ENCODE measurements at regions of chr11 and their contacts with region 1.

Region 1: DNA sequence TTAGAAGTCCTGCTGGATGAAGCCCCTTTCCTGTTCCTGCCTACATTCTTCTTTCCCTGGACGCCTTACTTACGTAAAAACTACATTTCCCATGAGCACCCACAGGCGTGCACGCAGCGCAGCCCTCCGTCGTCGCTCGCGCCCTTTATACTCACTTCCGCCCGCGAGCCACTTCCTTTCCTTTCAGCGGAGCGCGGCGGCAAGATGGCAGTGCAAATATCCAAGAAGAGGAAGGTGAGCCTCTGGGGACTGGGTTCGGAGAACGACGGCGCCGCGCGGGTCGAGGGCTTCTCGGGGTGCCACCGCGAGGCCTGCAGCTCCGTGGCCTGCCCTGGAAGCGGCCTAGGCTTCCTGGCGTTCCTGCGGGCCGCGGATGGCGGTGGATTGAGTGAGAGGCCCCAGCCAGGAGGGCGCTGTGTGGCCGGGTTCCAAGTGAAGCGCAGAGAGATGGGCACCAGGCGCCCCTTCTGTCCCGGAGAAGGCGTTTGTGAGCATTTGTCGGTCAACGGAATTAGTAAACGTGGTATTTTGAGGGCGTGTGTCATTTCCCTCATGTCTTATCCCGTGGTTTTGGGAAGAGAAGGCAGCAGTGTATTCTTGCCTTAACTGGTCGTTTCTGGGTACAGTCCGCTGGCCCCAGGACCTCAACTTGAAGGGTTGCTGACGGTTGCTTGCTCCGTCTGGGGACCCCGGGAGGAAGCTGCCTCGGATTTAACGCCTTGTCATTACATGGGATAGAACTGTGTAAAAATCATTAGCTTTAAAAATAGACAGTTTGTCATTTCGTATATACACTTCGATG is at the start of gene RPS3:
- DNase-seq: peak; percentile 89 to 92
- ATAC-seq: peak; percentile 96 to 99 (median 98)
- H3K4me3 ChIP-seq: peak within 1 kb of the TSS; percentile 53 to 87 (median 78)
- H3K27ac ChIP-seq: peak within 1 kb of the TSS; percentile 42 to 98 (median 91)
- H3K4me1 ChIP-seq: peaks cover 8 to 44% (median 29%) of the 10 kb centered on the region in 9 donors
- H3K27me3 ChIP-seq: no peaks in the 10 kb centered on the region
- CTCF ChIP-seq: peak in 4 of 9 donors; percentile 8 to 46 (median 38)
- total RNA-seq, gene RPS3: 803 to 1,301 (median 939) TPM

Region 2: GRCh38 chr11:75445315-75445953 is 45.9 kb after region 1 on chr11:
- intact Hi-C with region 1: loop called in 2 of 10 experiments (anchors 10 kb)
- DNase-seq: peak; percentile 66 to 75
- ATAC-seq: peak; percentile 57 to 85 (median 66)
- H3K4me3 ChIP-seq: no peak overlapping the region
- H3K27ac ChIP-seq: no peak overlapping the region
- H3K4me1 ChIP-seq: peaks cover 0 to 7% (median 0%) of the 10 kb centered on the region in 9 donors
- H3K27me3 ChIP-seq: no peaks in the 10 kb centered on the region
- CTCF ChIP-seq: peak; percentile 91 to 98 (median 94)

Region 3: DNA sequence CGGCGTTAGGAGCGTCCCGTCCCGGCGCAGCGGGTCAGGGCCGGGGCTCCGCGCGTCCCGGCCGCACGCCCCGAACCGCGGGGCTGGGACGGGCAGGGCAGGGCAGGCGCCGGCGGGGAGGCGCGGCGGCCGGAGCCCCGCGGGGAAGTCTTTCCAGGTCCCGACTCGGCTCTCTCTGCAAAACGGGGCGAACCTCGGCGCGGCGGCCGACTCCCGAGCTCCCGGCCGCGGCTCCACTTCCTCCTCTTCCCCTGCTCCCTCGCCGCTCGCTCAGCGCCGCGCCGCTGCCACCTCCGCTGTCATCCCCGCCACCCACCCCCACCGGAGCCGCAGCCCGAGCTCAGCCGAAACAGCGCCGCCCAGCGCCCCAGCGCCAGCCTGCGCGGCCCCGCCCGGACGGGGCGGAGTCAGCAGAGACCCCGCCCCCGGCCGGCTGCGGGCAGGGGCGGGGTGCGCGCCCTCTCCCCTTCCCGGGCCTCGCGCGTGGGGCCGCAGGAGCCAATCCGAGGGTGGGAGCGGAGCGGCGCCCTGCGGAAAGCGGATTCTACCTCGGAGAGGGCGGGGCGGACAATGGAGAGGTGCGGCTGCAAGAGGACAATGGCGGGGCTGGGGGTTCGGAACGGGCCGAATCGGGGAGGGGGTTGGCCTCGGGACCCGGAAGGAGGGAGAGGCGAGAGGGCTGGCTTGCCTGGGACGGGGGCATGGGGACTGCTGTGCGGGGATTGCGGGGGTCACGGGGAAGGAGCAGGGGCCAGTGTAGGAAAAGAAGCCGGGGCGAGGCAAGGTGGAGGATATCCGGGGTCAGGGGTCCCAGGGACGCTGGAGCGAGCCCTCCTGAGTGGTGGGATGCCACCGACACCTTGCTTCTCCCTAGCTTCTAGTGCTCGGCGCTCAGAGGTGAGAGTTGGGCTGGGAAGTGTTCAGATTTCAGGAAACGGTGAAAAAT is 126.3 kb after region 1 on chr11 and contains the start of gene GDPD5:
- intact Hi-C with region 1: loop called in 3 of 10 experiments (anchors 5 kb)
- DNase-seq: peak; percentile 80 to 83
- ATAC-seq: peak; percentile 95 to 98 (median 96)
- H3K4me3 ChIP-seq: peak within 1 kb of the TSS; percentile 65 to 98 (median 76)
- H3K27ac ChIP-seq: peak within 1 kb of the TSS in 6 of 10 donors; percentile 31 to 71 (median 47)
- H3K4me1 ChIP-seq: peaks cover 3 to 36% (median 23%) of the 10 kb centered on the region in 9 donors
- H3K27me3 ChIP-seq: peaks cover 0 to 22% (median 0%) of the 10 kb centered on the region in 7 donors
- CTCF ChIP-seq: peak; percentile 17 to 79 (median 57)
- total RNA-seq, gene GDPD5: 3.3 to 8.0 (median 4.1) TPM

Measured in heart right ventricle (tissue), 16 donors.